ENCODE measurements at regions of chr3 and their contacts with region 1.

Region 1: DNA sequence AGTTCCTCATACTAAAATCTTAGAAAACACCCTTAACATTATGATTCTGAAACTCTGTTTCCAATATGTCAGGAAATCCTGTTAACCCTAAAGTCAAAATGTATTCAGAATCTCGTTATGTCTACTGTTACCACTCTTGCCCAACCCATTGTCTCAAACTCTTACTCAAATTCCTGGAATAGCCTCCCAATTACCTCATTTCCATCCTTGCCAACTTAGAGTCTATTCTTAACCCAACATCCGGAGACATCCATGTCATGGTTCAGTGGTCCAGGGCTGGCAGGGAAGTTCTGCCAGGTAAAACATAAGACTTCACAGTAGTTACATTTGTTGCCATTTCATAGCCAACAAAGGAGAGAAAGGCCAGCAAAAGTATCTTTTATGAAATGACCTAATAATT is 593.9 kb downstream of the PYDC2 start:
- DNase-seq: no peak
- ATAC-seq: no peak
- H3K4me3 ChIP-seq: no peak overlapping the region
- H3K27ac ChIP-seq: no peak overlapping the region
- H3K4me1 ChIP-seq: no peaks in the 10 kb centered on the region
- H3K27me3 ChIP-seq: no peaks in the 10 kb centered on the region
- CTCF ChIP-seq: no peak

Region 2: DNA sequence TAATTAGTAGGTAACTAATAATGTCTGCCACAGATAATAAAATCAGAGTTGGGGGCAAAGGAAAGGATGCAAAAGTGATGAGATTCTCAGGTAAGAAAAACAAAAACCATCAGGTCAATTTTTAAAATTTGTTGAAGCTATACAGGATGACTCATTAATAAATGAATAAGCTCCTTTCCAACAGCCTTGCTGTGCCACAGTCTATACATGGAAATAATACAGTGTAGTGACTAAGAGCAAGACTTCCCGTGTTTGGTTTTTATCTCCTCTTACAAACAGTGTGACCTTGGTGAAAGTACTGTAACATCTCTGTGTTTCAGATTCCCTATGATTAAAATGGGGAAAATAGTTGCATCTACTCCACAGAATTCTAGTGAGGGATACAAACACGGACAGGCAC is 262.3 kb before region 1 on chr3:
- CTCF ChIA-PET with region 1: no interaction called
- POLR2A ChIA-PET with region 1: no interaction called
- in situ Hi-C with region 1: no loop called
- intact Hi-C with region 1: no loop called
- DNase-seq: no peak
- ATAC-seq: no peak
- H3K4me3 ChIP-seq: no peak overlapping the region
- H3K27ac ChIP-seq: no peak overlapping the region
- H3K4me1 ChIP-seq: no peaks in the 10 kb centered on the region
- H3K27me3 ChIP-seq: no peaks in the 10 kb centered on the region
- CTCF ChIP-seq: no peak

Region 3: GRCh38 chr3:192273513-192273912 is 218.6 kb after region 1 on chr3:
- CTCF ChIA-PET with region 1: interaction called, 12 read pairs
- POLR2A ChIA-PET with region 1: no interaction called
- in situ Hi-C with region 1: no loop called
- intact Hi-C with region 1: no loop called
- DNase-seq: no peak
- ATAC-seq: no peak
- H3K4me3 ChIP-seq: no peak overlapping the region
- H3K27ac ChIP-seq: no peak overlapping the region
- H3K4me1 ChIP-seq: no peaks in the 10 kb centered on the region
- H3K27me3 ChIP-seq: no peaks in the 10 kb centered on the region
- CTCF ChIP-seq: no peak

Region 4: DNA sequence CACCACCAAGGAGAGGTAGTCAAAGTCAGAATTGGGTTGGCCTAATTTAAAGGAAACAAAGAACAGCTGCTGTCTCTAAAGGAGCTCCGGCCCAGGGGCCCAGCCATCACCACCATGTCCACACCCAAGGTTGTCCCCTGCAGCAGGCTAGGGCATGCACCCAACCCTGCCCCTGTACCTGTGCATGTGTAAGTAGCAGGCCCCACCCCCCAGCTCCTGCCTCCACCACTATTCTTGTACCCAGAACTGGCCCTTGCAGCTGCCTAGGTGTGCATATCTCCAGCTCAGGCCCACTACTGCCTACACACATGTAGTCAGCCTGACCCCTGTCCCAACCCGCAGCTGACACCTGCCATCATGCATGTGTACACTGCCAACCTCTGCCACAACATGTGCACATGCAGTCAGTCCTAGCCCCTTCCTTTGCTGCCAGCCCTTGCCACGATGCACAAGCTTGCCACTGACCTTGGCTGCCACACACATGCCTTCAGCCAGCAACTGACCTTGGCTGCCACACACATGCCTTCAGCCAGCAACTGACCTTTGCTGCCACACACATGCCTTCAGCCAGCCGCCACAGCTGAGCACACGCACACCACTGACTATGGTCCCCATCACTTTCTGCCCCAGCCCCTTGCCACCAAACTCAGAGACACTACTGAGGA is 632.7 kb after region 1 on chr3:
- CTCF ChIA-PET with region 1: no interaction called
- POLR2A ChIA-PET with region 1: no interaction called
- in situ Hi-C with region 1: no loop called
- intact Hi-C with region 1: no loop called
- DNase-seq: no peak
- ATAC-seq: no peak
- H3K4me3 ChIP-seq: no peak overlapping the region
- H3K27ac ChIP-seq: no peak overlapping the region
- H3K4me1 ChIP-seq: no peaks in the 10 kb centered on the region
- H3K27me3 ChIP-seq: no peaks in the 10 kb centered on the region
- CTCF ChIP-seq: no peak

Region 5: DNA sequence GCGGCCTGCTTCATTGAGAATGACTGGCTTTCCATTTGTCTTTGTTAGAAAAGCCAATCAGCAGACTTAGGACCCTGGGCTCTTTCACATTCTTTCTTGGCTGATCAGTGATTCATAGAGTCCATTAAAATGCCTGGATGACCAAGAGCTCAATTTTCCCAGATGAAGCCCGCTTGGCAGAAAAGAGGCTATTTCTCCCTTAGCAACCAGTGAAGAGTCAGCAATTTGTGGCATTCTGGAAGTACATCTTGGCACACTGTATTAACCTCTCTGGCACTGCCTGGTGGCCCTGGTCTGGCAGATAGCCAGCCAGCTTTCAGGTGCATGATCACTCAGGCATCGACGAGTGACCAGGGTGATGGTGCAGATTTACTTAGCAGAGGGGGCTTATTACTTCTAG is 1040.5 kb after region 1 on chr3:
- CTCF ChIA-PET with region 1: no interaction called
- POLR2A ChIA-PET with region 1: no interaction called
- in situ Hi-C with region 1: no loop called
- intact Hi-C with region 1: no loop called
- DNase-seq: no peak
- ATAC-seq: no peak
- H3K4me3 ChIP-seq: no peak overlapping the region
- H3K27ac ChIP-seq: no peak overlapping the region
- H3K4me1 ChIP-seq: no peaks in the 10 kb centered on the region
- H3K27me3 ChIP-seq: no peaks in the 10 kb centered on the region
- CTCF ChIP-seq: no peak